Heart right ventricle (tissue), 16 donors: ENCODE measurements at regions of chr7 and their contacts with region 1.

Region 1: GRCh38 chr7:84823530-84823929 is 363.3 kb downstream of the SEMA3D start:
- DNase-seq: no peak
- ATAC-seq: no peak
- H3K4me3 ChIP-seq: no peak overlapping the region
- H3K27ac ChIP-seq: no peak overlapping the region
- H3K4me1 ChIP-seq: no peaks in the 10 kb centered on the region
- H3K27me3 ChIP-seq: no peaks in the 10 kb centered on the region
- CTCF ChIP-seq: no peak

Region 2: DNA sequence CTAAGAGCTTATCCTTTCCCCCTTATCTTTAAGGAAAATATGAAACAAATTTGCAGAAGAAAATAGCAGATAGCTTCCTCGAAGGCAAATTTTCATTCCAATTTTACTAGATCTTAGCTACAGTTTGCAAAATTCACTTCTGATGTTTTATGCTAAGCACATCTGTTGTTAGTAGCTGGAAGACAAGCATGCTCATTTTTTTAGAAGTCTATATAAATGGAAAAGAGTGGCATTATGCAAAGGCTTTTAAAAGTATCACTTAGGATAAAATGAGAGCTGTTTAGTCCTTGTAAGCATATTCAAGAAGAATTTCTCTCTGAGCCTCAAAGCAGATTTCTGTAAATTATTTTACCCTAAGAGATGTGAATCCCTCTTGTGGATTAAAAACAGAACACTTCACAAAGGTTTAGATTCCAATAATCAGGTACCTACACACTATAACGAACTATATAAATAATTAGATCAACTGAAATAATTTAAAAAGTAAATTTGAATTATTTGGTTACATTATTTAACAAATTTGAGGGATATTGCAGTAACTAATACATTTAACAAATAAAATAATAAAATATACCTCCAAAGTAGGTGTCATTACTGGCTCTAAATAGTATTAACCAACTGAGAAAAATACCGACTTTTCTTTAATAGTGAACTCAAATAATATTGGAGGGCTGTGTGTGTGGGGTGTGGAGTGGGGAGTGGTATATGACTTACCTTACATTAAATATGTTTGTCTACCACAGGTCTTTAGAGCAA is 56.2 kb after region 1 on chr7:
- intact Hi-C with region 1: loop called in 1 of 10 experiments (anchors 10 kb)
- DNase-seq: no peak
- ATAC-seq: no peak
- H3K4me3 ChIP-seq: no peak overlapping the region
- H3K27ac ChIP-seq: no peak overlapping the region
- H3K4me1 ChIP-seq: no peaks in the 10 kb centered on the region
- H3K27me3 ChIP-seq: no peaks in the 10 kb centered on the region
- CTCF ChIP-seq: no peak